GM18951 (cell line): ENCODE measurements at regions of chr11 and their contacts with region 1.

Region 1: GRCh38 chr11:75809991-75810390 is 5.0 kb upstream of the UVRAG start:
- POLR2A ChIP-seq: no peak

Region 2: GRCh38 chr11:75858611-75859010 is 48.6 kb after region 1 on chr11:
- in situ Hi-C with region 1: loop called (anchors 5 kb)
- POLR2A ChIP-seq: no peak

Region 3: DNA sequence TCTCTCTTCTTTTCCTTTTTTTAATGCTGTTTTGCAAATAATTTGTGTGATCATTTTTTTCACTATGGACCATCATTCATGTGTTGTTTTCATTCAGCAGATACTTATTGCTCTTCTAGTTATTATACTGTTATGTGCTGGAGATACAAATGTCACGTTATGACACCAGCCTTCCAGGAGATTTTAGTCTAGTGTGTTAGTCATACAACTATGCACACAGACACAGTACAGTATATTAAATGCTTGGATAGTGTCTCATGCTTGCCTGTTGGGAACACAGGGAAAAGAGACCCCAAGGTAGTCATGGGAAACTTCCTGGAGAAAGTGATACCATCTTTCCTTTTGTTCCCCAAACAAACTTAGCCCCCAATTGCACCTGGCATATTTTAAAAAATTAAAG is 121.1 kb after region 1 on chr11:
- in situ Hi-C with region 1: no loop called
- POLR2A ChIP-seq: no peak

Region 4: DNA sequence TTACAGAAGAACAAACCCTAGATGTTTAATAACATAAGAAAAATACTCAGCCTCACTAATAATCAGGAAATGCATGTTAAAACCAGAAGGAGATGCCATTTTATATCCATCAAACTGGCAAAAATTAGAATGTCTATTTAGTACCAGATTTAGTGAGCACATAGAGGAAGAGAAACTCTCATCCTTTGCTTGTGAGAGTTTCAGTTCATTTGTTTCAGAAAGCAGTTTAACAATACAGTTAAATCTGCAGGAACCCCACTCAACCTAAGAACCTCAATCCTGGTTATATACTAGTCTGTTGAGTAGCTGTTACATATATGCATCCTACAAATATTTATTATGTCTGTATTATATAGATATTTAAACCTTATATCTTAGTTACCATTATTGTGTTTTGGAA is 223.7 kb after region 1 on chr11:
- in situ Hi-C with region 1: no loop called
- POLR2A ChIP-seq: no peak